ENCODE measurements at regions of chr11 and their contacts with region 1.

Region 1: GRCh38 chr11:119666463-119667131 is 62.4 kb downstream of the NECTIN1 start:
- DNase-seq: peak; percentile 89
- ATAC-seq: peak; percentile 98
- H3K4me3 ChIP-seq: no peak overlapping the region
- H3K27ac ChIP-seq: no peak overlapping the region
- H3K4me1 ChIP-seq: peaks cover 7% of the 10 kb centered on the region; the same call in 1 of the 2 replicates
- H3K27me3 ChIP-seq: no peaks in the 10 kb centered on the region
- CTCF ChIP-seq: peak; percentile 97

Region 2: GRCh38 chr11:119728651-119729580 is 62.3 kb after region 1 on chr11 and contains the start of gene NECTIN1:
- CTCF ChIA-PET with region 1: interaction called, 4 read pairs
- POLR2A ChIA-PET with region 1: no interaction called
- intact Hi-C with region 1: loop called (anchors 1 kb)
- DNase-seq: peak; percentile 86
- ATAC-seq: peak; percentile 77
- H3K4me3 ChIP-seq: peak within 1 kb of the TSS; percentile 97
- H3K27ac ChIP-seq: peak within 1 kb of the TSS; percentile 30; the same call in 1 of the 2 replicates
- H3K4me1 ChIP-seq: peaks cover 22% of the 10 kb centered on the region
- H3K27me3 ChIP-seq: no peaks in the 10 kb centered on the region
- CTCF ChIP-seq: peak; percentile 98
- total RNA-seq, gene NECTIN1: 19.9 and 24.6 TPM in 2 replicates

Region 3: DNA sequence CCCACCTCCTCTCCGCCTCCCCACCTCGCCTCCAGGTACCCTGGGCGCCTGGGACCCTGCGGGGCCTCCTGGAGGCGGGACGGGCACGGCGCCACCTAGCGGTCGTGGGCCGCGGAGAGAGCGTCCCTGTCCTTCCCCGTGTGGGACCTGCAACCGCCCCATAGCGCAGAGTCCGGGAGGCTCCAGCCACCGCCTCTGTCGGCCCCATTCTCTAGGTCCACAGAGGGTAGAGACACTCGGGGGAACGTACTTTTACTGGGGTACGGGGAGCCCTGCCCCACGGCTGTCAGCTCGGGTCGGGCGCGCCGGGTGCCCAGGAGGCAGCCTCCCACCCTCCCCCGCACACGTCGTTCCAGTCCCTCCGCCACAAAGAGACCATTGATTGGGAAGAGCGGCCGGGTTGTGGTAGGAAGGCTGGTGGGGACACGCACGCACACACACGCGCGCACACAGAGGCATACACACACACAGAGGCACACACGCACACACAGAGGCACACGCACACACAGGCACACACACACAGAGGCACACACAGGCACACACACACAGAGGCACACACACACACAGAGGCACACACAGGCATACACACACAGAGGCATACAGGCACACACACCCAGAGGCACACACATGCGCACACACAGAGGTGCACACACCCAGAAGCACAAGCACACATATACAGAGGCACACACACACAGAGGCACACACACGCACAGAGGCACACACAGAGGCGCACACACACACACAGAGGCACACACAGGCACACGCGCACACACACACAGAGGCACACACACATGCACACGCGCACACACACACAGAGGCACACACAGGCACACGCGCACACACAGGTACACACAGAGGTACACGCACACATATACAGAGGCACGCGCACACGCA is 75.0 kb after region 1 on chr11:
- CTCF ChIA-PET with region 1: no interaction called
- POLR2A ChIA-PET with region 1: no interaction called
- intact Hi-C with region 1: loop called (anchors 1 kb)
- DNase-seq: peak; percentile 60
- ATAC-seq: peak; percentile 92
- H3K4me3 ChIP-seq: no peak overlapping the region
- H3K27ac ChIP-seq: no peak overlapping the region
- H3K4me1 ChIP-seq: no peaks in the 10 kb centered on the region
- H3K27me3 ChIP-seq: 0 out of 2 replicates have a peak, but pooled peaks cover 9% of the 10 kb centered on the region
- CTCF ChIP-seq: peak; percentile 94

Region 4: DNA sequence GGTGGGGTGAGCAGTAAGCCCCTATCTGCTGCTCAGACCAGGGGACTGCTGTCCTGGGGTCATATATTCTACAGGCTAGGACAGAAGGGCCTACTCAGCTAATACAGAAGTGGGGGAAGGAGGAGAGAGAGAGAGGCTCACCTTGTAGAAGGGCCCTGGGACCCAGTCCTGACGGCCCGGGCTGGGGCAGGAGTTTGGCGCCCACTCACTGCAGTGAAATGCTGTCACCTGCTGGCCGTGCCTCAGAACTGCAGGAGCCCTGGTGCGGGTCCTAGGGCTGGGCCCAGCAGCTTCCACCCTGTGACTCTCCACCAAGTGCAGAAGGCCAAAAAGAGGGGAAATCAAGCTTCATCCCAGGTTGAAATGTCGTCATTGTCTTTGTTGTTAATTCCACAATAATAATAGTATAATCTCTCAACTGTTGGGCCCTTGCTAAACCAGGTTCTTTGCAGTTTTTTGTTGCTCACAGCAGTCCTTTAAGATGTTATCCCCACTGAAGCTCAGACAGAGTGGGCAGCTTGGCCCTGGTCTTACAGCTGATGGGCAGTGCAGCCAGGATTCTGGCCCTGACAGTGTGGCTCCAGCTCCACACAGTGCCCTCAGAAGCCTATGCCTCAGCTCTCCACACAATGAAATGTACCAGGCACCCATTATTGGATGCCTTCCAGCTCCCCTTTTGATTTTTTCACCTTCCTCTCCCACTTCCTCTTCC is 441.7 kb after region 1 on chr11:
- CTCF ChIA-PET with region 1: no interaction called
- POLR2A ChIA-PET with region 1: no interaction called
- intact Hi-C with region 1: loop called (anchors 1 kb)
- DNase-seq: peak; percentile 80
- ATAC-seq: peak; percentile 92
- H3K4me3 ChIP-seq: no peak overlapping the region
- H3K27ac ChIP-seq: no peak overlapping the region
- H3K4me1 ChIP-seq: no peaks in the 10 kb centered on the region
- H3K27me3 ChIP-seq: peaks cover 42% of the 10 kb centered on the region
- CTCF ChIP-seq: peak; percentile 99

Measured in PC-3 (cell line).